Right ventricle myocardium superior (tissue), 1 donor: ENCODE measurements at regions of chr19 and their contacts with region 1.

Region 1: GRCh38 chr19:54231077-54231931 is 8.5 kb upstream of the LILRB3 start:
- DNase-seq: peak; percentile 91
- ATAC-seq: peak; percentile 97

Region 2: DNA sequence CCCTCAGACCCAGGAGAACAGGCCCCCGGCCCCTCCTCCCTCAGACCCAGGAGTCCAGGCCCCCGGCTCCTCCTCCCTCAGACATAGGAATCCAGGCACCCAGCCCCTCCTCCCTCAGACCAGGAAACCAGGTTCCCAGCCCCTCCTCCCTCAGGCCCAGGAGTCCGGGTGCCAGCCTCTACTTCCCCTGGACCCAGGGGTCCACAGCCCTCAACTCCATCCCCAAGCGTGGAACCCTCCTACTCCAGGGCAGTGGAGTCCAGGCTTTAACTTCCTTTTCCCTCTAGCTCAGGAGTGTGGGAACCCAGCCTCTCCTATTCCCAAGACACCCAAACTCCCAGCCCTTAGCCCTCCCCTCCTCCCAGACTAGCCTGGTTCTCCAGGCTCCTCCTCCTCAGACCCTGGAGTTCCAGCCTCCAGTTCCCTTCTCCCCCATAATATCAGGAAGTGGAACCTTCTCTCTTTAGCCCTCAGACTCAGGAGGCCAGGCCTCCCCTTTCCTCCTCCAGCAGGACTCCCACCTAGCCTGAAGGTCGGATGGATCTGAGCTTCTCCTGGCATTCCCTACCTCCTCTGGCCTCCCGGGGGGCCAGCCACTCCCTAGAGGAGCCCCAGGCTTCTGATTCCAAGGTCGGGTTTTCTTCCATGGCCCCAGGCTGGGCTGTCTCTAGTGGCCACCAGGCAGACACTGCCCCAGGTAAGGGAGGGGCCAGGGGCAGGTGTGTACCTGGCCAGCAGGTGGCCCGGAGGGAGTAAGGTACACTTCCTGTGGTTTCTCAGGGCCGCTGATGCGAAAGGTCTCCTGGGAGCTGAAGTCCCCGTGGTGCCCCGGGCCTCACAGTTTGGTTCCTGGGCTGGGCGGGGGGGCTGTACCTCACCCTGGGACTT is 58.6 kb before region 1 on chr19 and contains the start of gene TMC4:
- intact Hi-C with region 1: loop called (anchors 5 kb)
- DNase-seq: no peak
- ATAC-seq: peak; percentile 25
- total RNA-seq, gene TMC4: 0.91 TPM